Natural killer cell (primary cell): ENCODE measurements at regions of chr19 and their contacts with region 1.

Region 1: DNA sequence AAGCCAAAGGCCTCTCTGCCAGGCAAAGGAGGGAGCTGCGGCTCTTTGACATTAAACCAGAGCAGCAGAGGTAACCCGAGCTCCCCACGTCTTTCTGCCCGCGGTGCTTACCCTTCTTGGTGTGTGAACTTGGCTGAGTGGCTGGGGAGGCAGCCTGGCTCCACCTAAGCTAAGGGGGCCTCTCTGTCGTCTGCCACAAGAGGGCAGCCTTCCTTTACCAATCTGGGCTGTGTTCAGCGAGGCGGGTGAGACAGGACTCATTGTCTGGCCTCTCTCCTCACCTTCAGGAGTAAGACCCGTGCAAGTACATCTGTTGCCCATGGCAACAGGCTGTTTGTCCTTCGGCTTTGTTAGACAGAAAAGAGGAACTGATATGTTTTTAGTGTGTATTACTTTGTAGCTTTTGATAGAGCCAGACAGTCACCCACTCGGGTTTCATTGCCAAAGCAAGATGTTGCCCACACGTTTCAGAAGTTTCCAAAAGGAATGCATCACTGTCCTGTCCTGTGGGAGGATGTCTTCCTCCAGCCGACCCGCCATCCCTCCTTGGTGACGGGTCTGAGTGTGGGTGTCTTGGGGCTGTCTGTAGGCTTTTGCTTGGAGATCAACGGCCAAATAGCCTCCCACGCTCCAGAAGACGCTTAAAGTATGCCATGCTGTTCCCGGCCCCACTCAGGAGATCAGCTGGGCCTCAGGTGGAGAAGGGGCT is 4.6 kb downstream of the POP4 start:
- DNase-seq: peak; percentile 78 to 93
- ATAC-seq: peak; percentile 73 to 86 (median 76)
- H3K4me3 ChIP-seq: no peak overlapping the region
- H3K4me3 Mint-ChIP-seq: peak overlapping the region; percentile 13
- H3K27ac ChIP-seq: peak overlapping the region; percentile 66
- H3K27ac Mint-ChIP-seq: peak overlapping the region; percentile 41 to 81
- H3K4me1 ChIP-seq: peaks cover 26% of the 10 kb centered on the region
- H3K4me1 Mint-ChIP-seq: peaks cover 19 to 42% of the 10 kb centered on the region in 2 donors
- H3K27me3 ChIP-seq: no peaks in the 10 kb centered on the region
- H3K27me3 Mint-ChIP-seq: no peaks in the 10 kb centered on the region
- CTCF ChIP-seq: peak; percentile 82

Region 2: GRCh38 chr19:29596885-29597525 is 13.7 kb before region 1 on chr19:
- intact Hi-C with region 1: no loop called
- DNase-seq: peak in 1 of 2 donors; percentile 41
- ATAC-seq: no peak
- H3K4me3 ChIP-seq: no peak overlapping the region
- H3K4me3 Mint-ChIP-seq: no peak overlapping the region
- H3K27ac ChIP-seq: no peak overlapping the region
- H3K27ac Mint-ChIP-seq: no peak overlapping the region
- H3K4me1 ChIP-seq: no peaks in the 10 kb centered on the region
- H3K4me1 Mint-ChIP-seq: no peaks in the 10 kb centered on the region
- H3K27me3 ChIP-seq: no peaks in the 10 kb centered on the region
- H3K27me3 Mint-ChIP-seq: peaks cover 22 to 24% of the 10 kb centered on the region in 2 donors
- CTCF ChIP-seq: no peak

Region 3: GRCh38 chr19:29671393-29672160 is 60.9 kb after region 1 on chr19:
- intact Hi-C with region 1: loop called (anchors 1 kb)
- DNase-seq: peak; percentile 81 to 93
- ATAC-seq: peak; percentile 71 to 86 (median 71)
- H3K4me3 ChIP-seq: peak overlapping the region; percentile 8
- H3K4me3 Mint-ChIP-seq: peak overlapping the region; percentile 91
- H3K27ac ChIP-seq: peak overlapping the region; percentile 96
- H3K27ac Mint-ChIP-seq: peak overlapping the region; percentile 94 to 98
- H3K4me1 ChIP-seq: peaks cover 100% of the 10 kb centered on the region
- H3K4me1 Mint-ChIP-seq: peaks cover 75 to 85% of the 10 kb centered on the region in 2 donors
- H3K27me3 ChIP-seq: no peaks in the 10 kb centered on the region
- H3K27me3 Mint-ChIP-seq: no peaks in the 10 kb centered on the region
- CTCF ChIP-seq: peak; percentile 77

Region 4: GRCh38 chr19:29694669-29695627 is 84.2 kb after region 1 on chr19:
- intact Hi-C with region 1: loop called (anchors 1 kb)
- DNase-seq: peak; percentile 79 to 91
- ATAC-seq: peak; percentile 95 to 96 (median 95)
- H3K4me3 ChIP-seq: no peak overlapping the region
- H3K4me3 Mint-ChIP-seq: no peak overlapping the region
- H3K27ac ChIP-seq: no peak overlapping the region
- H3K27ac Mint-ChIP-seq: peak overlapping the region; percentile 76 to 87
- H3K4me1 ChIP-seq: peaks cover 23% of the 10 kb centered on the region
- H3K4me1 Mint-ChIP-seq: peaks cover 28 to 38% of the 10 kb centered on the region in 2 donors
- H3K27me3 ChIP-seq: no peaks in the 10 kb centered on the region
- H3K27me3 Mint-ChIP-seq: no peaks in the 10 kb centered on the region
- CTCF ChIP-seq: peak; percentile 86

Region 5: GRCh38 chr19:29715701-29716581 is 105.2 kb after region 1 on chr19:
- intact Hi-C with region 1: loop called (anchors 1 kb)
- DNase-seq: no peak
- ATAC-seq: peak; percentile 2 to 17 (median 10)
- H3K4me3 ChIP-seq: peak overlapping the region; percentile 50
- H3K4me3 Mint-ChIP-seq: peak overlapping the region; percentile 95
- H3K27ac ChIP-seq: peak overlapping the region; percentile 81
- H3K27ac Mint-ChIP-seq: peak overlapping the region; percentile 75 to 88
- H3K4me1 ChIP-seq: peaks cover 53% of the 10 kb centered on the region
- H3K4me1 Mint-ChIP-seq: peaks cover 49 to 51% of the 10 kb centered on the region in 2 donors
- H3K27me3 ChIP-seq: no peaks in the 10 kb centered on the region
- H3K27me3 Mint-ChIP-seq: no peaks in the 10 kb centered on the region
- CTCF ChIP-seq: no peak

Region 6: GRCh38 chr19:29873024-29873800 is 262.5 kb after region 1 on chr19:
- intact Hi-C with region 1: loop called (anchors 10 kb)
- DNase-seq: peak; percentile 59 to 81
- ATAC-seq: peak; percentile 65 to 91 (median 86)
- H3K4me3 ChIP-seq: no peak overlapping the region
- H3K4me3 Mint-ChIP-seq: peak overlapping the region; percentile 56
- H3K27ac ChIP-seq: no peak overlapping the region
- H3K27ac Mint-ChIP-seq: no peak overlapping the region
- H3K4me1 ChIP-seq: peaks cover 18% of the 10 kb centered on the region
- H3K4me1 Mint-ChIP-seq: peaks cover 0 to 6% of the 10 kb centered on the region in 2 donors
- H3K27me3 ChIP-seq: peaks cover 7% of the 10 kb centered on the region
- H3K27me3 Mint-ChIP-seq: peaks cover 30 to 44% of the 10 kb centered on the region in 2 donors
- CTCF ChIP-seq: peak; percentile 87